T-cell (primary cell): ENCODE measurements at regions of chr7 and their contacts with region 1.

Region 1: DNA sequence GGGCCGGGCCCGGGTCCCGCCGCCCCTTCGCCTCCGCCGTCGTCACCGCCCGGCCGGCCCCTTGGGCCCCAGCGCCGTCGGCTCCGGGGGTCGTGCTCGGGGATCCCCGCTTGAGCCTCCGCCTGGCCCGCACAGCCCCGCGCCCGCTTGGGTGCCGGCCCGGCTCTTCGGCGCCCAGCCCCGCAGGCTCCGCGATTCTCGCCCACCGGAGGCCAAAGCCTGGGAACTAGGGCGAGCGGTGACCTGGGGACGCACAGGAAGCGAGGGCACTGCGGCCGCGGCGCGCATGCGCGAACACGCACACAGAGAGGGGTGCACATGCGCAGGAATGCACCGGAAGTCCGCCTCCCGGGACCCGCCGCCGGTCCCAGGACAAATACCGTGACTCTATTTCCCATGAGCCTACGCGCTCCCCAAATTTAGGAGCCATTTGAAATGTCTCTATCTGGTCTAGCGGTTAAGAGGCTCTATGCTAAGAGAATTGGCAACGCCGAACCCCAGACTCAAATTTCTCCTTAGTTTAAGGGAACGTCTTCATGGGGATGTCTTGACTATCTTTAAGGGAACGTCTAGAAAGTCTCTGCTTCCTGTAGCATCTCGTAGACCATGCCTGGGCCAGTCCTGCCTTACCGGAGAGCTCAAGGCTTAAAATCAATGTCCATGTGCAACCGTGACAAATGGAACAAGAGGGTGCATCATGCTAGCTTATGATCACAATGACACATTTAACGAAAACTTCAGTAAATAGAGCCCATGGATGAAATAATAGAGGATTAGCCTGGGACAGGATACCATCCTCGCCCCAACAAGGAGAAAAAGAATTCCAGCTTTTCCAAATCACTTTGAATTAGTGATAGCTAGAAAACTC is at the start of gene ZNF12:
- DNase-seq: peak; percentile 81 to 97 (median 91)
- ATAC-seq: peak; percentile 86 to 92 (median 90)
- H3K4me3 ChIP-seq: peak within 1 kb of the TSS; percentile 75 to 87
- H3K4me3 Mint-ChIP-seq: peak within 1 kb of the TSS; percentile 89 to 92 (median 92)
- H3K27ac ChIP-seq: peak within 1 kb of the TSS; percentile 61
- H3K27ac Mint-ChIP-seq: peak within 1 kb of the TSS; percentile 85 to 92
- H3K4me1 ChIP-seq: peaks cover 12 to 36% of the 10 kb centered on the region in 2 experiments
- H3K4me1 Mint-ChIP-seq: peaks cover 40 to 49% (median 42%) of the 10 kb centered on the region in 3 donors
- H3K27me3 ChIP-seq: peaks cover 0 to 13% of the 10 kb centered on the region in 2 experiments
- H3K27me3 Mint-ChIP-seq: peaks cover 3% of the 10 kb centered on the region in 2 donors
- total RNA-seq, gene ZNF12: 25.1 to 49.7 (median 41.6) TPM

Region 2: GRCh38 chr7:6130007-6130587 is 576.8 kb before region 1 on chr7:
- CTCF ChIA-PET with region 1: no interaction called
- POLR2A ChIA-PET with region 1: interaction called in 1 of 2 experiments, 11 read pairs
- DNase-seq: no peak
- ATAC-seq: no peak
- H3K4me3 ChIP-seq: no peak overlapping the region
- H3K4me3 Mint-ChIP-seq: no peak overlapping the region
- H3K27ac ChIP-seq: no peak overlapping the region
- H3K27ac Mint-ChIP-seq: no peak overlapping the region
- H3K4me1 ChIP-seq: no peaks in the 10 kb centered on the region
- H3K4me1 Mint-ChIP-seq: peaks cover 5 to 19% (median 15%) of the 10 kb centered on the region in 3 donors
- H3K27me3 ChIP-seq: no peaks in the 10 kb centered on the region
- H3K27me3 Mint-ChIP-seq: no peaks in the 10 kb centered on the region

Region 3: DNA sequence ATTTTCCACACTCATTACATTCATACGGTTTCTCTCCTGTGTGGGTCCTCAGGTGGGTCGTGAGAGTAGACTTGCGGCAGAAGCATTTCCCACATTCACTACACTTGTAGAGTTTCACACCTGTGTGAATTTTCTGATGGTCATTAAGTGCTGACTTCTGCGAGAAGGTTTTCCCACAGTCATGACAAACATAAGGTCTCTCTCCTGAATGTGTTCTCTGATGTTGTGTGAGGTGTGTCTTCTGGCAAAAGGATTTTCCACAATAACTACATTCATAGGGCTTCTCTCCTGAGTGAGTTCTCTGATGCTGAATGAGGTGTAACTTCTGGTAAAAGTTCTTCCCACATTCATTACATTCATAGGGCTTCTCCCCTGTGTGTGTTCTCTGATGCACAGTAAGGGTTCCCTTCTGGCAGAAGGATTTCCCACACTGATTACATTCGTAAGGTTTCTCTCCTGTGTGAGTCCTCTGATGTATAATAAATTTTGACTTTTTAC is 15.3 kb before region 1 on chr7:
- CTCF ChIA-PET with region 1: no interaction called
- POLR2A ChIA-PET with region 1: no interaction called
- DNase-seq: no peak
- ATAC-seq: no peak
- H3K4me3 ChIP-seq: no peak overlapping the region
- H3K4me3 Mint-ChIP-seq: no peak overlapping the region
- H3K27ac ChIP-seq: no peak overlapping the region
- H3K27ac Mint-ChIP-seq: no peak overlapping the region
- H3K4me1 ChIP-seq: no peaks in the 10 kb centered on the region
- H3K4me1 Mint-ChIP-seq: no peaks in the 10 kb centered on the region
- H3K27me3 ChIP-seq: no peaks in the 10 kb centered on the region
- H3K27me3 Mint-ChIP-seq: no peaks in the 10 kb centered on the region